ENCODE measurements at regions of chr3 and their contacts with region 1.

Region 1: GRCh38 chr3:184299497-184300376 is 696 bp downstream of the PSMD2 start:
- DNase-seq: no peak
- H3K4me3 ChIP-seq: peak overlapping the region; percentile 56 to 88 (median 56)
- H3K27ac ChIP-seq: peak overlapping the region in 1 of 3 donors; percentile 54
- H3K4me1 ChIP-seq: peaks cover 11 to 13% of the 10 kb centered on the region in 2 donors
- H3K27me3 ChIP-seq: no peaks in the 10 kb centered on the region
- CTCF ChIP-seq: no peak
- POLR2A ChIP-seq: no peak

Region 2: GRCh38 chr3:184174646-184175492 is 124.9 kb before region 1 on chr3 and contains the start of gene AP2M1:
- intact Hi-C with region 1: loop called (anchors 5 kb)
- DNase-seq: peak; percentile 99
- H3K4me3 ChIP-seq: peak within 1 kb of the TSS; percentile 53 to 87 (median 87)
- H3K27ac ChIP-seq: peak within 1 kb of the TSS; percentile 64 to 91 (median 66)
- H3K4me1 ChIP-seq: peaks cover 26 to 29% of the 10 kb centered on the region in 2 donors
- H3K27me3 ChIP-seq: no peaks in the 10 kb centered on the region
- CTCF ChIP-seq: no peak
- POLR2A ChIP-seq: peak in 1 of 2 donors; percentile 89
- total RNA-seq, gene AP2M1: 180 to 302 (median 212) TPM

Region 3: DNA sequence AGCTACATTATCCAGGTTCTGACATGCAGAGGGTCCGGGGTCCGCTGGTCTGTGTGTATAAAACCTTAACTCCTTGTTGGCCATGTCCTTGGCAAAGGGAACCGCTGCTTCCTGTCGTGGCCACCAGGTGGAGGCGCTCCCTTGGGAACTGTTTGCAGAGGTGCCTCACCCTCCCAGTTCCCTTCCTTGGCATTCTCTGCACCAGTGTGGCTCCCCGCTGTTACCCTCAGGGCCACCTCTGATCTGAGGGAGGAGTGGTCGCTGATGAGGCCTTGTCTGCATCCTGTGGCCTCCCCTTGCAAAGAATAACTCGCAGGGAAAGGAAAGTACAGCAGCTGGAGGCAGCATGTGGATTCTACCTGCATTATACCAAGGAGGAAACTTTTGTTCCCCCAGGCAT is 169.7 kb after region 1 on chr3:
- intact Hi-C with region 1: no loop called
- DNase-seq: peak; percentile 7 to 8
- H3K4me3 ChIP-seq: no peak overlapping the region
- H3K27ac ChIP-seq: no peak overlapping the region
- H3K4me1 ChIP-seq: no peaks in the 10 kb centered on the region
- H3K27me3 ChIP-seq: no peaks in the 10 kb centered on the region
- CTCF ChIP-seq: peak in 2 of 6 experiments; percentile 22 to 27
- POLR2A ChIP-seq: no peak

Measured in thyroid gland (tissue), 4 donors.